Endothelial cell of umbilical vein (primary cell): ENCODE measurements at regions of chr1 and their contacts with region 1.

Region 1: GRCh38 chr1:184051485-184052193 is at the start of gene TSEN15:
- DNase-seq: peak; percentile 75
- H3K4me3 ChIP-seq: peak within 1 kb of the TSS; percentile 85 to 89 (median 85)
- H3K27ac ChIP-seq: peak within 1 kb of the TSS; percentile 54
- H3K4me1 ChIP-seq: peaks cover 11% of the 10 kb centered on the region
- H3K27me3 ChIP-seq: peaks cover 7 to 17% of the 10 kb centered on the region in 2 experiments
- CTCF ChIP-seq: no peak
- POLR2A ChIP-seq: peak; percentile 79
- total RNA-seq, gene TSEN15: 25.8 and 26.4 TPM in 2 replicates

Region 2: GRCh38 chr1:183281553-183282091 is 770.0 kb before region 1 on chr1:
- CTCF ChIA-PET with region 1: no interaction called
- POLR2A ChIA-PET with region 1: no interaction called
- dilution Hi-C with region 1: no loop called
- intact Hi-C with region 1: loop called (anchors 1 kb)
- DNase-seq: peak; percentile 92
- H3K4me3 ChIP-seq: no peak overlapping the region
- H3K27ac ChIP-seq: no peak overlapping the region
- H3K4me1 ChIP-seq: peaks cover 12% of the 10 kb centered on the region
- H3K27me3 ChIP-seq: no peaks in the 10 kb centered on the region
- CTCF ChIP-seq: peak; percentile 83 to 91
- POLR2A ChIP-seq: no peak

Region 3: DNA sequence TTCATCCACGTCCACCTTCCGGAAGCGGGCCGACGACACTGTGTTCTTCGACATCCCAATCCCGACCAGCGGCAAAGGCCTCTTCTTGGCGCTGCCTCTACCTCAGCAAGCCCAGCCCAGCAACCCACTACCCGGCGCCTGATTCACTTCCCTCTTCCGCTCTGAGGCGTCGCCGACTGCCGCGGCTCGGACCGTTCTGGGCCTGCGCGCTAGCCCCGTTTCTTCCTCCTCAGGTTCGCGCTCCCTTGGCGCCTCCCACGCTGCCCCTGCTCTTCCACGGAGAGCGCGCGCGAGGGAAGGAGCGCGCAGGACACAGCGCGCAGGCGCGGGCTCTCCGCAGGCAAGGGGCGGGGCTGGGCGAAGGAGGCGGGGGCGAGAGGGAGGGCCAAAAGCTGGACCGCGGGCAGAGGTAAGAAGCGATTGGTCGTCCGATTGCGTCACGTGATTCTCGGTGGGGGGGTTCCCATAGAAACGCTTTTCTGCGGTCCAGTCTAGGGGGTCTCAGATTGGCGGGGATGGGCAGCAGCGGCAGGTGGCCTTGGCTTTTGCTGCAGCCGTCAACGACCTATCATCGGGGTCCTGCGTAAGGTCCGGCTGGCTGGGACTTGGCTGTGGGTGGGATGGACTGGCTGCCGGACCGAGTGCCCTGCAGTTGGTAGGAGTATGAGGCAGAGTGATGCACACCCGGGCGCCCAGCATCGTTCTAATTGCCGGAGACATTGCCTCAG is 415.9 kb before region 1 on chr1 and contains the start of gene ARPC5:
- CTCF ChIA-PET with region 1: interaction called, 4 read pairs
- POLR2A ChIA-PET with region 1: no interaction called
- dilution Hi-C with region 1: no loop called
- intact Hi-C with region 1: loop called (anchors 5 kb)
- DNase-seq: peak; percentile 100
- H3K4me3 ChIP-seq: peak within 1 kb of the TSS; percentile 93 to 100 (median 99)
- H3K27ac ChIP-seq: peak within 1 kb of the TSS; percentile 67
- H3K4me1 ChIP-seq: peaks cover 28% of the 10 kb centered on the region
- H3K27me3 ChIP-seq: no peaks in the 10 kb centered on the region
- CTCF ChIP-seq: no peak
- POLR2A ChIP-seq: peak; percentile 95
- total RNA-seq, gene ARPC5: 185 and 190 TPM in 2 replicates

Region 4: DNA sequence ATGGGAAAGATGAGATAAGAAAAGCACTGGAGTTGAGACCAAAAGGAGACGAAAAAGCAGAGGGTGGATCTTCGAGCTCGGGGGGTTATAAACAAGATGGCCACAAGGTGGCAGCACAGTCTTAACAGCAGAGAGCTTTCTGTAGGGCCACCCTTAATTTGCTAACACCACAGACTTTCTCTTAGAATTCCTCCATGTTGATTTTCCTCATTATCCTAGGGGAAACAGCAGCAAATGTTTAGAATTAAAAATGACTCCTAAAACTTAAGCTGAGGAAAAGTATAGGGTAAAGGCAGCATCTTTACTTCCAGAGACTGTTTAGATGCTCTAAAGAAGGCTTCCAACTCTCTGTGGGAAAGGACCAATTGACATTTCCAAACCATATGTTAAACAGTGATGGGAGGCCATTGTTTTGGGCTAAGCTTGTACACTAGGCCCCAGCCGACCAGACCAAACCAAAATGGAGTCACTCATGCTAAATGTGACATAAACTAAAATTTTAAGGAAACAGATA is 396.0 kb before region 1 on chr1:
- CTCF ChIA-PET with region 1: interaction called, 11 read pairs
- POLR2A ChIA-PET with region 1: no interaction called
- dilution Hi-C with region 1: no loop called
- intact Hi-C with region 1: loop called (anchors 1 kb)
- DNase-seq: peak; percentile 81
- H3K4me3 ChIP-seq: no peak overlapping the region
- H3K27ac ChIP-seq: no peak overlapping the region
- H3K4me1 ChIP-seq: peaks cover 27% of the 10 kb centered on the region
- H3K27me3 ChIP-seq: no peaks in the 10 kb centered on the region
- CTCF ChIP-seq: peak; percentile 73 to 81
- POLR2A ChIP-seq: no peak

Region 5: GRCh38 chr1:183956559-183957188 is 95.0 kb before region 1 on chr1:
- CTCF ChIA-PET with region 1: interaction called, 3 read pairs
- POLR2A ChIA-PET with region 1: no interaction called
- dilution Hi-C with region 1: no loop called
- intact Hi-C with region 1: loop called (anchors 5 kb)
- DNase-seq: peak; percentile 79
- H3K4me3 ChIP-seq: no peak overlapping the region
- H3K27ac ChIP-seq: no peak overlapping the region
- H3K4me1 ChIP-seq: peaks cover 9% of the 10 kb centered on the region
- H3K27me3 ChIP-seq: peaks cover 5% of the 10 kb centered on the region in 2 experiments
- CTCF ChIP-seq: peak in 1 of 2 donors; percentile 13
- POLR2A ChIP-seq: no peak

Region 6: DNA sequence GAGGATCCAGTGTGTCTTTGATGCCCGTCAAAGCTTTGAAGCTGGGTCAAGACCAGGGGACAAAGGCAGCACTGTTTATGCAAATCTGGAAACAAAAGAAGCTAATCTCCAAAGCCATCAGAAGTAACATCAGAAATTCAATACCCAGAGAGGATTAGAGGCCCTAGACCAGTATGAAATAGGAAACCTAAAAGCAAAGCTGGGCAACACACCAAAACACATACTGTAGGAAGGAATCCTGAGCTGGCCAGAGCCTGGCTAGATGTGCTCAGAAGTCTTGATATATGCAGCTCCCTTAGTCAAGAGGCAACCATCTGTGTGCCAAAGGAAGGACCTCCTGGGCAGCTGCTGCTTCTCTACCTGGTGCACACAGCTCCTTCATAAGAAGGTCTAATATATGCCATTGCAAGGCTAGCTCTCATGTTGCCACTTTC is 26.4 kb before region 1 on chr1:
- CTCF ChIA-PET with region 1: no interaction called
- POLR2A ChIA-PET with region 1: no interaction called
- dilution Hi-C with region 1: no loop called
- intact Hi-C with region 1: no loop called
- DNase-seq: no peak
- H3K4me3 ChIP-seq: no peak overlapping the region
- H3K27ac ChIP-seq: no peak overlapping the region
- H3K4me1 ChIP-seq: no peaks in the 10 kb centered on the region
- H3K27me3 ChIP-seq: peaks cover 23 to 27% of the 10 kb centered on the region in 2 experiments
- CTCF ChIP-seq: no peak
- POLR2A ChIP-seq: no peak

Region 7: GRCh38 chr1:184037849-184038591 is 13.6 kb before region 1 on chr1:
- CTCF ChIA-PET with region 1: interaction called, 3 read pairs
- POLR2A ChIA-PET with region 1: no interaction called
- dilution Hi-C with region 1: no loop called
- intact Hi-C with region 1: loop called (anchors 1 kb)
- DNase-seq: no peak
- H3K4me3 ChIP-seq: peak overlapping the region in 1 of 3 experiments; percentile 33
- H3K27ac ChIP-seq: no peak overlapping the region
- H3K4me1 ChIP-seq: peaks cover 7% of the 10 kb centered on the region
- H3K27me3 ChIP-seq: peaks cover 46 to 65% of the 10 kb centered on the region in 2 experiments
- CTCF ChIP-seq: no peak
- POLR2A ChIP-seq: no peak

Region 8: GRCh38 chr1:184082541-184083415 is 31.1 kb after region 1 on chr1:
- CTCF ChIA-PET with region 1: no interaction called
- POLR2A ChIA-PET with region 1: no interaction called
- dilution Hi-C with region 1: no loop called
- intact Hi-C with region 1: no loop called
- DNase-seq: peak; percentile 20
- H3K4me3 ChIP-seq: no peak overlapping the region
- H3K27ac ChIP-seq: no peak overlapping the region
- H3K4me1 ChIP-seq: no peaks in the 10 kb centered on the region
- H3K27me3 ChIP-seq: no peaks in the 10 kb centered on the region
- CTCF ChIP-seq: no peak
- POLR2A ChIP-seq: no peak

Region 9: DNA sequence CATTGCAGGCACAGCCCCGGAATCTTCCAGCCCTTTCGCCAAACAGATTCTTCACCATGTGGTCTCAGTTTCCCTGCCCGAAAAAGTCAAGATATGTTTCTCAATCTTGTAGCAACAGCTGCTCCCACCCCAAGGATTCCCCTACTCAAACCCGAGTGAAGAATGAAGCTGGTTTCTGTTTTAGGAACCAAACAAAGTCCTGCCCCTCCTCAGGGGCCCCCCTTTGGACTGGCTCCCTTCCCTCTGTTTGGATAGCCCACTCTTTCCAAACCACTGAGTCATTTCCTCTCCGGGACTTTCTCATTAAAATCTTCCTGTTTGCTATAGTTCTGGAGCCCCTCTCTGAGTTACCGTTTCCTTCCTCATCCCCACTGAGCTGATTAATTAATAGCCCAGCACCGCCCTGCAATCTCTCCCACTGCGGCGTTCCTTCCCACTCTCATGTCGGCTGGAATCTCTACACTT is 100.8 kb after region 1 on chr1:
- CTCF ChIA-PET with region 1: interaction called, 3 read pairs
- POLR2A ChIA-PET with region 1: no interaction called
- dilution Hi-C with region 1: no loop called
- intact Hi-C with region 1: loop called (anchors 2 kb)
- DNase-seq: peak; percentile 93
- H3K4me3 ChIP-seq: peak overlapping the region; percentile 40 to 81 (median 74)
- H3K27ac ChIP-seq: peak overlapping the region; percentile 79
- H3K4me1 ChIP-seq: peaks cover 29% of the 10 kb centered on the region
- H3K27me3 ChIP-seq: peaks cover 0 to 3% of the 10 kb centered on the region in 2 experiments
- CTCF ChIP-seq: no peak
- POLR2A ChIP-seq: no peak